PC-9 (cell line): ENCODE measurements at regions of chr18 and their contacts with region 1.

Region 1: GRCh38 chr18:7334973-7335568 is 104.2 kb downstream of the LRRC30 start:
- DNase-seq: peak in 1 of 2 experiments; percentile 41
- H3K4me3 ChIP-seq: no peak overlapping the region
- H3K27ac ChIP-seq: no peak overlapping the region
- H3K4me1 ChIP-seq: no peaks in the 10 kb centered on the region
- H3K27me3 ChIP-seq: peaks cover 35% of the 10 kb centered on the region
- CTCF ChIP-seq: no peak

Region 2: DNA sequence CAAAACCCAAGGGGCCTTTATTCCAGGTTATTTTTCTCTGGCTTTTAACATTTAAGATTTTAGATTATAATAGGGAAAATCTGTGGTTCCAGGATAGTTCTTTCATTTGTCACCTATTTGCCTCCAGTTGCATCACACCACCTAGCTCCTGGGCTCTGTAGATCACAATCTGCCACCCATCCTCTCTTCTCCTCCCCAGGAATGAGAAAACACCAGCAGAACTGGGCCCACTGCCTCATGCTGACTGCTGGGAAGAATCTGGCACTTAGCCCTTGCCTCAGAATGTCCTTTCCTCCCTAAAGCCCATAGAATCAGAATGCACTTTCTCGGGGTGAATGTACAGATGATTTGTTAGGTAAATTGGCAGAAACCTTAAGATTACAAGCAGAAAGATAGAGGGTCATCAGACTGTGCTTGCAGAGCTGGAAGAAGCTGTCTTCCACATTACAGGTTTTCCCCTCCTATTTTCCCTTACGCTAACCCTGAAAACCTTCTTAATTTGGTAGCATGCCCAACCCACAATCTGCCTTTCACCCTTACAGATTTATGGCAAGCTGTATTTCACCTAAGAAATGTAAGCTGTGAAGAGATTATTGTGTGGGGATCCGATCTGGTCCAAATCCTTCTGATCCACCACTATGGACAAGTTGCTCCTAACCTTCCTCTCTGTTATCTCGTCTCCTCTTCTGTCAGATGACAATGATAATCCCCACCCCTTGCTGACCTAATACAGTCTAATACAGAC is 31.6 kb before region 1 on chr18:
- CTCF ChIA-PET with region 1: no interaction called
- POLR2A ChIA-PET with region 1: no interaction called
- intact Hi-C with region 1: loop called (anchors 2 kb)
- DNase-seq: peak in 1 of 2 experiments; percentile 14
- H3K4me3 ChIP-seq: no peak overlapping the region
- H3K27ac ChIP-seq: no peak overlapping the region
- H3K4me1 ChIP-seq: no peaks in the 10 kb centered on the region
- H3K27me3 ChIP-seq: peaks cover 8% of the 10 kb centered on the region
- CTCF ChIP-seq: no peak

Region 3: GRCh38 chr18:7322817-7323485 is 12.1 kb before region 1 on chr18:
- CTCF ChIA-PET with region 1: no interaction called
- POLR2A ChIA-PET with region 1: no interaction called
- intact Hi-C with region 1: no loop called
- DNase-seq: no peak
- H3K4me3 ChIP-seq: no peak overlapping the region
- H3K27ac ChIP-seq: no peak overlapping the region
- H3K4me1 ChIP-seq: no peaks in the 10 kb centered on the region
- H3K27me3 ChIP-seq: peaks cover 16% of the 10 kb centered on the region; the same call in 1 of the 2 replicates
- CTCF ChIP-seq: no peak